Common myeloid progenitor, CD34-positive (primary cell): ENCODE measurements at regions of chr3 and their contacts with region 1.

Region 1: GRCh38 chr3:107064445-107065060 is 312.7 kb upstream of the CCDC54 start:
- DNase-seq: peak; percentile 64 to 85 (median 81)
- H3K4me3 ChIP-seq: peak overlapping the region in 2 of 7 experiments; percentile 2 to 10
- H3K27ac ChIP-seq: no peak overlapping the region
- H3K4me1 ChIP-seq: peaks cover 2 to 13% (median 10%) of the 10 kb centered on the region in 4 experiments
- H3K27me3 ChIP-seq: no peaks in the 10 kb centered on the region

Region 2: DNA sequence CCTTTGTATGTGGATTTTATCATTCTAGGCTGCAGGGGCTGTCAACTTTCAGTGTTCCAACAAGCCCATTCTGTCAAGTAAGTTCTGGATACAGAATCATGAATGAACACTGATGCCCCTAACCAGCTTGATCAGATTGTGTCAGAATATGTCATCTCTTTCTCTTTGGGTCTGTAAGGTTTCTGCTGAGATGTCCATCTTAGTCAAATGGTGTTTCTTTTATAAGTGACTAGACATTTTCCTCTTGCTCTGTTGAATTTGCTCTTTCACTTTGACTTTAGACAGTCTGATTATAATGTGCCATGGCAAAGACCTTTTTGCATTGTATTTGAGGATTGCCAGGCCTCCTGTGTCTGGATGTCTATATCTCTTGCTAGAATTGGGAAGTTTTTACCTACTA is 534.8 kb before region 1 on chr3:
- CTCF ChIA-PET with region 1: no interaction called
- POLR2A ChIA-PET with region 1: no interaction called
- DNase-seq: no peak
- H3K4me3 ChIP-seq: no peak overlapping the region
- H3K27ac ChIP-seq: no peak overlapping the region
- H3K4me1 ChIP-seq: no peaks in the 10 kb centered on the region
- H3K27me3 ChIP-seq: no peaks in the 10 kb centered on the region

Region 3: DNA sequence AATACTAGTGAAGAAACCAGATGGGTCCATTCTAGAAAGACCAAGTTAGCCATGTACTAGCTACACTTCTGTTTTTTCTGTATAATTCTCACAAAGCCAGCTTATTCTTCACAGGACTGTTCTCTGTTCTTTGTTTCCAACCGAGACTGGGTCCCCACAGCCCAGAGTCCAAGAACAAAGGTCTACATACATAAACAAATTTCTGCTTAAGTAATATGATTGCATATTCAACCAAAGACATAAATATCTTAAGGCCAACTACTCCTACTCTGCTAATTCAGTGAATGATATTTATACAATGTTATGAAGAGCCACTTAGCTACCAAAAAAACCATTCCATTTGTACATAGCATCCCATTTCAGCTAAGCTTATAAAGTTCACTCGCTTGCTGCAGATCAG is 12.8 kb after region 1 on chr3:
- CTCF ChIA-PET with region 1: interaction called, 10 read pairs
- POLR2A ChIA-PET with region 1: interaction called, 3 read pairs
- DNase-seq: no peak
- H3K4me3 ChIP-seq: no peak overlapping the region
- H3K27ac ChIP-seq: no peak overlapping the region
- H3K4me1 ChIP-seq: no peaks in the 10 kb centered on the region
- H3K27me3 ChIP-seq: no peaks in the 10 kb centered on the region

Region 4: DNA sequence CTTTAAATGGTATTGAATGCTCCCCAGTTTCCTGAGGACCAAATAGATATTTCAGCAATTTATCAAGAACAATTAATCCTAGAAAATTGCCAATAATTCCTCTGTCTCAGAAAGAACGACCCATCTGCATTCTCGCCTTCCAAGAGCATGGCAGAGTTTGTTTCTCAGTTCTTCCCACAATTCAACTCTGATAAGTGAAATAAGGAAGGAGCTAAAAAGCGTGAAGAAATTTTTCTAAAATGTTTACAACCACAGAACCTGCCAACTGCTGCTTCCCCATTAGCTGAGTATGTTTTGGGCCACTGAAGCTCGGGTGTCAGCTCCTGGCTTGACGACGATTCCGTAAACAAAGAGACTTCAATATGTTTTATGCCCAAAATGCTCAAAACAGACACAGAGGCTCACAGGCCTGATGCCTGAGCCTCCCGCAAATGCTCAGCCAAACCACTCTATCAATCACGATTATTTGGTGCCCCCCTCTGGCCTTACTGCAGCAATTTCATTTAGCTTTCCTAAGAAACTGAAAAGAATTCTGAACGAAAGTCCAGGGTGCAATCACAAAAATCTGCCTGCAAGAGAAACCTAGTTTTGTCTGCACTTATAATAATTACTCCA is 53.5 kb after region 1 on chr3:
- CTCF ChIA-PET with region 1: interaction called, 14 read pairs
- POLR2A ChIA-PET with region 1: interaction called, 3 read pairs
- DNase-seq: peak; percentile 64 to 78 (median 72)
- H3K4me3 ChIP-seq: no peak overlapping the region
- H3K27ac ChIP-seq: peak overlapping the region in 1 of 2 experiments; percentile 15
- H3K4me1 ChIP-seq: peaks cover 0 to 3% (median under 1%) of the 10 kb centered on the region in 4 experiments
- H3K27me3 ChIP-seq: no peaks in the 10 kb centered on the region